ENCODE measurements at regions of chr19 and their contacts with region 1.

Region 1: GRCh38 chr19:44890366-44891015 is 563 bp upstream of the TOMM40 start:
- DNase-seq: peak; percentile 99
- H3K4me3 ChIP-seq: peak overlapping the region; percentile 58
- H3K27ac ChIP-seq: peak overlapping the region; percentile 72
- H3K27me3 ChIP-seq: no peaks in the 10 kb centered on the region
- CTCF ChIP-seq: no peak

Region 2: GRCh38 chr19:44696939-44697669 is 193.4 kb before region 1 on chr19:
- in situ Hi-C with region 1: no loop called
- DNase-seq: no peak
- H3K4me3 ChIP-seq: no peak overlapping the region
- H3K27ac ChIP-seq: no peak overlapping the region
- H3K27me3 ChIP-seq: no peaks in the 10 kb centered on the region
- CTCF ChIP-seq: no peak

Region 3: GRCh38 chr19:44954824-44955586 is 64.5 kb after region 1 on chr19 and contains the start of gene CLPTM1:
- in situ Hi-C with region 1: loop called (anchors 10 kb)
- DNase-seq: peak; percentile 94
- H3K4me3 ChIP-seq: peak within 1 kb of the TSS; percentile 87
- H3K27ac ChIP-seq: peak within 1 kb of the TSS; percentile 93
- H3K27me3 ChIP-seq: no peaks in the 10 kb centered on the region
- CTCF ChIP-seq: no peak

Region 4: GRCh38 chr19:45008552-45008951 is 118.1 kb after region 1 on chr19:
- in situ Hi-C with region 1: no loop called
- DNase-seq: no peak
- H3K4me3 ChIP-seq: no peak overlapping the region
- H3K27ac ChIP-seq: no peak overlapping the region
- H3K27me3 ChIP-seq: no peaks in the 10 kb centered on the region
- CTCF ChIP-seq: no peak

Region 5: GRCh38 chr19:45038931-45039893 is 148.7 kb after region 1 on chr19 and contains the start of gene CLASRP:
- in situ Hi-C with region 1: no loop called
- DNase-seq: peak; percentile 81
- H3K4me3 ChIP-seq: peak within 1 kb of the TSS; percentile 91
- H3K27ac ChIP-seq: peak within 1 kb of the TSS; percentile 91
- H3K27me3 ChIP-seq: no peaks in the 10 kb centered on the region
- CTCF ChIP-seq: no peak